ENCODE measurements at regions of chr1 and their contacts with region 1.

Region 1: DNA sequence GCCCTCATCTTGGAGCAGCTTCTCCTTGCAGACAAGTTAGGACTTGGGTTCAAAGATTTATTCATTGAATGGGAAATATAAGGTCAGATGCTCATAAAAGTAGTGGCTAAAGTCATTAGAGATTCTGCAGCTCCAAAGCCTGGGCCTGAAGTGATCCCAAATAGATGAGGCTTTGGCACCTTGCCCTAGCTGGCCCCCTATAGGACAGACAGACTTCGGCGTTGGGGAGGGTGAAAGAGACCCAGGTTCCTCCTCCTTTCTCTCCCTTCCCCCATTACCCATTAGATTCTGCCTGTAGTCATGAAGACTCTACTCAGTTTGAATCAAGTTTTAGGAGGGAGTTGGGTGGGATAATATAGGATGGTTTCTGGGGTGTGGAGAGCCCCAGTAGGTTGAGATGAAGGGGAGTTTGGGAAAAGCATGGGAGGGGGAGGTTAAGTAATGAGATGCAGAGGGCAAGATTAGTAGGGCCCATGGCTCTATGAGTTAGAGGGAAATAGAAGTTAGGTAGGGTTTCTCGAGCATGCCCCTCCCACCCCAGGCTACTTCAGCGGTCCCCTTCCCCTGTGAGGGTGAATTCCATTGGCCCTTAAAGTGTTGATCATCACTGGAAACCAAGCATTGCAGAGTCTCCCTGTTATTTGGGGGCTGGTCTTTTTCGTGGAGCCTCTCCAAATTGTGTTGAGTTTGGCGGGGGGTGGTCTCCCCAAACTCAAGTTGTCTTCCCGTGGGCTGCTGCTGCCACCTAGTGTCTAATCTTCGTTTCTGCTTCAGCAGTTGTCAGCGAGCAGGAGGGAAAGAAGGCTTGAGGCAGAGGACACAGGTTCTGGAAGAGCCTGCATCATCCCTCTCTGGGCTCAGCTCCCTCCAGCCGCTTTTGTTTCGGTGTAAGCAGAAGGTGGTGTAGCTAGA is 2.1 kb upstream of the AHDC1 start:
- DNase-seq: peak; percentile 56

Region 2: DNA sequence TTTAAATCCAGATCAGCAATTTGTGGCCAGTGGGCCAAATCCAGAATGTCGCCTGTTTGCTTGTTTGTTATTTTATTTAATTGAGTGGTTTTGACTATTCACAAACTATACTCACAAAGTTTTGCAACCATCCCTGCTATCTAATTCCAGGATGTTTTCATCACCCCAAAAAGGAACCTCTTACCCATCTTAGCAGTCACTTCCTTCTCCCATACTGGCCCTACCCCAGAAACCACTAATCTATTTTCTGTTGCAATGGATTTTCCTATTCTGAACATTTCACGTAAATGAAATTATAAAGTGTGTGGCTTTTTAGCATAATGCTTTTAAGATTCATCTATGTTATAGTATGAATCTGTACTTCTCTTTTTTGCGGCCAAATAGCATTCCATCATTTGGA is 330.4 kb before region 1 on chr1:
- CTCF ChIA-PET with region 1: no interaction called
- POLR2A ChIA-PET with region 1: no interaction called
- DNase-seq: no peak

Region 3: DNA sequence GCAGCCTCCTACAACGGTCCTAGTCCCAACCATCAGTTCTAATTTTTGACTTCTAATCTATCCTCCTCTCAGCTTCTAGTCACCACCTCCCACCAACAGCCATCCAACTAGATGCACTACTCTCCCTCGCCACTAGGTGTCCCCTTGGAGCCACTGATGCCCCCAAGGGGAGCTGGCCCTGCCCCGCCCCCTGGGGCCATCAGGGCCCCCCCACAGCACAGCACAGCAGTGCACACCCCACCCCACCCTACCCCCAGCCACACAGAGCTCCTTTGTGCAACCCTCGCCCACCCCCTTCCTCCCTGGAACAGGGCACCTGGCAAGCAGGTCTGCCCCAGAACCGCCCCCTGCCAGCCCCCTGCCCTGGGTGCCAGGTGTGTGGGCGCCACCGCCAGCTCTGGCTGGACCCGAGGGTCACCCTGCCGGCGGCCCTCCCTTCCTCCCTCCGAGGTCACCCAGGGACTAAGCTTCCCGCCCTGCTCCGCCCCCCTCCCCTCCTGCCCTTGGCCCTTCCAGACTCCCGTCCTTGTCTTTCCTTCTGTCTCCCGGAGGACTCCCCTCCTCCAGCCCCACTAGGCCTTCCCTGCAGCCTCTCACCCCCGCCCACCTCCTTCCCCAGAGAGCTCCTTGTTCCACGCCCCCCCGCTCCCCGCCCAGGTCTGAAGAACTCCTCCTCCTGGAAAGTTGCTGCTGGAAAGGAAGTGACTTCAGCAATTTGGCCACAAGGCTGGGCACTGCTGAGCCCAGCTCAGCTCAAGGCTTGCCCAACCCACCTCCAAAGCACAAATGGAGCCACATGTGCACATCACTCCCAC is 49.1 kb before region 1 on chr1:
- CTCF ChIA-PET with region 1: interaction called, 13 read pairs
- POLR2A ChIA-PET with region 1: interaction called, 4 read pairs
- DNase-seq: peak; percentile 85

Region 4: GRCh38 chr1:27568300-27569087 is 37.6 kb before region 1 on chr1:
- CTCF ChIA-PET with region 1: interaction called, 12 read pairs
- POLR2A ChIA-PET with region 1: interaction called, 3 read pairs
- DNase-seq: peak; percentile 97

Region 5: DNA sequence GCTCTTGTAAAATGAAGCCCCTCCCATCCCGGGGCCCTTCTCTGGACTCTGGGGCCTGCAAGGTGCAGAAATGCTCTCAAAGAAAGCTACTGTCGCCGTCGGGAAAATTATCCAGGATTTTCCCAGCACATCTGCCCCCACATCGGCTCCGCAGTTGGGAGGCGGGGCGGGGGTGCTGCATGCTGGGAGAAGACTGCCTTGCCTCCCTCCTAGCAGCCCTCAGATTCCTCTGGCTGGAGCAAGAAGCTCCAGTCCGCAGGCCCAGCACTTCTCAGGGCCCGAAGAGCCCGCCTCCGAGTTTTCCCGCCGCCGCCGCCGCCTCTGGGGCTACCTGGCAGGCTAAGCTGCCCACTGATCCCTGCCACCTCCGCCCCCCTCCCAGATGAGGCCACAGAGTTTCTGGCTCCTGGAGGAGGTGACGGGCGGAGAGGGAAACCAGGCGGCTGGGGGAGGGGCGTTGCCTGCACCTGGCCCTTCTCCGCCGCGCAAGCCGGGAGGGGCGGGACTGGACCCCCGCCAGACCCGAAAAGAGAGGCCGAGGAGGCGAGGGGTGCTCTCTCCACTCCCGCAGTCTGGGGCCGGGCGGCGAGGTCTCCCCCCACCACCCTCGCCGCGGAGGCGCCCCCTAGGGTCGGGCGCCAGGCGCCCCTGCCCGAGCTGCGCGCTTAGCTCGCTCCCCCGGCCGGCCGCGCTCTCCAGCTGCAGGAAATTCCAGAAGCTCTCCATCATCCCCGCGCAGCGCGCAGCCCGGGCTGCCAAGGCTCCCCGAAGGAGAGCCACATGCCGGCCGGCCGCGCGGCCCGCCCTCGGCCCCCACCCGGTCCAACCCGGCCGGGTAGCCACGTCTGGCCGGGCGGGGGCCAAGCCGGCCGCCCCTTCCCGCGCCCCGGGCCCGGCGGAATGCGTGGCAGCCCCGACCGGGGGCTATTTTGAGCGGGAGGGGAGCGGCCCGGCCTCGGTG is 30.9 kb before region 1 on chr1:
- CTCF ChIA-PET with region 1: interaction called, 4 read pairs
- POLR2A ChIA-PET with region 1: interaction called, 10 read pairs
- DNase-seq: peak; percentile 67

Region 6: GRCh38 chr1:27589841-27590426 is 16.1 kb before region 1 on chr1:
- CTCF ChIA-PET with region 1: no interaction called
- POLR2A ChIA-PET with region 1: no interaction called
- DNase-seq: no peak

Region 7: GRCh38 chr1:27662707-27663393 is 56.8 kb after region 1 on chr1:
- CTCF ChIA-PET with region 1: interaction called, 54 read pairs
- POLR2A ChIA-PET with region 1: interaction called, 7 read pairs
- DNase-seq: peak; percentile 72

Region 8: DNA sequence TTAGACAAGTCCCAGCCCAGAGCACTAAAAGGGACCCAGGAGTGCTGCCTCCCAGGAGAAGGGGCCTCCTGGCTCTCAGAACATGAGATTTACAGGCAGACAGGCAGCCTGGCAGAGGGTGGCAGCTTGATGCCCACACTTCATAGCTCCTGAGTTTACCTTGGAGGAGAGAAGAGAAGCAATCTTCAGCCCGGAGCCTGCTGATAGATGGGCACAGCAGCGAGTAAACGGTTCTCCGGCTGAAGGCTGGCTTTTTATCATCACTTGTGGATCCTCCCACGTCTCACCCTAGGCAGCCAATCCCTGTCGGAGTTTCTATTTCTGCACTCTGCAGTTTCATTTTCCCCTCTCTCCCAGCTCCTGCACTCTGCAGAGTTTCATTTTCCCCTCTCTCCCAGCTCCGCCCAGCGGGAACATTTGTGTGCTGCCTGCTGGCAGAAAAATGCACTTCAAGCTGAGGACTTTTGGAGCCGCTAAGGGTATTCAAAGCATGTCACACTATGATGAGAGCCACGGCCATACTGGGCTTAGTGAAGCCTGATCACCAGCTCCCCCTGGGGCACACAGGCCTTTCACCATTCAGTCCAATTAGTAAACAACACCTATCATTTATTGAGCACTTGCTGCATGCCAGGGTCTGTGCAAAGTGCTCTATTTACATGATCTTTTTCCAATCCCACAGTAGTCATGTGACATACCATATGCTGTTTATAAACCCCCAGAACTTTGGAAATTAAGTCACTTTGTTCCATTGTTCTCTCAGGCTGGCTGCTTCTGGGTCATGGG is 66.1 kb after region 1 on chr1 and contains the start of gene IFI6:
- CTCF ChIA-PET with region 1: interaction called, 12 read pairs
- POLR2A ChIA-PET with region 1: no interaction called
- DNase-seq: peak; percentile 84

Measured in HEK293T (cell line).